Adrenal gland (tissue), 19 donors: ENCODE measurements at regions of chr1 and their contacts with region 1.

Region 1: DNA sequence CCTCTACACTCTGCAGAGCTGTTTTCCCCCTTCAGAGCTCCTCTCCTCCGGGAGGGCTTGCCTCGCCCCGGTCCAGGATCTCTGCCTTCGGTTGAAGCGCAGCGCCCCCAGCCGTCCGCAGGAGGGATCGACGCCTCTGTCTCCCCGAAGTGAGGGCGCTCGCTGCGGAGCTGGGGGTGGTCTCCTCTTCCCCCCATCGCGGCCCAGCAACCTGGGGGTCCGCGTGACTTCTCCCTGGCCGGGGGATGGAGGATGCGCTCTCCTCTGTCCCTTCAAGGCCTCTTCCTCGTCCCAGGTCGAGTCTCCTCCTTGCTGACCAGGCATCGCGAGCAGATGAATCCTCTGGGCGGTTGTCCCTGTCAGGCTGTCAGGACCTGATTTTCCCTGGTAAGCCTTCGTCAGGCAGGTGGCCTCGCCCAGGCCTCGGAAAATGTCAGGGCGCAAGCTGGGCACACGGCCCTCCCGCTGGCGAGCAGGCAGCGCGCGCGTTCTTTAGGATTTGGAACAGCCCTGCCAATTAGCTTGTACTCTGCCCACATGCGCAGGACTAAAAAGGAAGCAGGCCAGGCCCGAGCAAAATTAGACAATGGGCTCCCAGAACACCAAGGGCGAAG is 90.5 kb downstream of the EDEM3 start:
- DNase-seq: peak; percentile 68 to 89 (median 81)
- H3K4me3 ChIP-seq: peak overlapping the region in 2 of 4 donors; percentile 9 to 30
- H3K27ac ChIP-seq: peak overlapping the region in 2 of 5 donors; percentile 3 to 46
- H3K4me1 ChIP-seq: peaks cover 0 to 12% of the 10 kb centered on the region in 2 donors
- H3K27me3 ChIP-seq: no peaks in the 10 kb centered on the region
- CTCF ChIP-seq: peak; percentile 89 to 96 (median 94)
- POLR2A ChIP-seq: no peak

Region 2: DNA sequence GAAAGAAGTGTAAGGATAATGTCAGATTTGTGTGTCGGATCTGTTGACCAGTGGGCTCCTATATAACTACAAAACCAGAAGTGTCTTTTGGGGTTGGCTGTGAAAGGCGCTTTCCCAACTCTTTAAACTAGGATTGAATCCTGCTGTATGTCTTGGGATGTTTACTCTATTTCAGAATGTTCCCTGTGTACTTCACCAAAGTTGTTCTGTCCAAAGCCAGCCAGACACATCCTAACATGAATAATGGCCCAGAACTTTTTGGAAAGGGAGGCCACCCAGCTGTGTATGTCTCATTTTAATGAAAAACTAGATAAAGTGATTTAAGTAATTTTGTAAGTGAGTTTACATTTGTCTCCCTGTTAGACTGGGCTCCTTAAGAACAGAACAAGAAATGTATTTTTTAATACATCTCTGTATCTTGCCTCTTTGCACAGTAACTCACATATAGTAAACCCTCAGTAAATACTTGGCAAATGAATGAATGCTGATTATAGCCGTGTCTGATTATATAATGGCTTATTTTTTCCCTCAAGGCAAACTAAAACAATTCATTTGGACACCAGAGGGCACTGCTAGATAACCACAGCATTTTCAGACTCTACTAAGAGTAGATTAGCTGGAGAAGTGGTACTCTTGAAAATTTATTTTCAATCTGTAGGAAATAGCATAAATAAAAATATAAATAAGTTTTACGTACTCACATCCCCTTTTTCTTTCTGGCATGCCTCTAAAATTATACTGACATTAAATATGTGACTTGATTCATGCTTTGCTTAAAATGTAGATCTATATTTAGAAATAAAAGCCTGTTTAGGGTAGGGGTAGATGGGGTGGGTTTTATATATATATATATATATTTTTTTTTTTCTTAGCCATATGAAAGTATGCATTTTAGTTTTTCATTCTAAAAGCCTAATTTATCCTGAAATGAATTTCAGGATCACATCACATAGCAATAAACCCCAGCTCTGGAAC is 588.8 kb before region 1 on chr1:
- intact Hi-C with region 1: loop called in 1 of 2 experiments (anchors 10 kb)
- DNase-seq: peak in 6 of 7 donors; percentile 33 to 59 (median 54)
- H3K4me3 ChIP-seq: no peak overlapping the region
- H3K27ac ChIP-seq: peak overlapping the region in 2 of 5 donors; percentile 1 to 36
- H3K4me1 ChIP-seq: no peaks in the 10 kb centered on the region
- H3K27me3 ChIP-seq: no peaks in the 10 kb centered on the region
- CTCF ChIP-seq: peak; percentile 36 to 91 (median 86)
- POLR2A ChIP-seq: no peak

Region 3: GRCh38 chr1:184386312-184387068 is 277.7 kb before region 1 on chr1 and contains the start of gene C1orf21:
- intact Hi-C with region 1: loop called (anchors 10 kb)
- DNase-seq: peak; percentile 88 to 93 (median 91)
- H3K4me3 ChIP-seq: peak within 1 kb of the TSS; percentile 70 to 96 (median 76)
- H3K27ac ChIP-seq: peak within 1 kb of the TSS; percentile 50 to 90 (median 88)
- H3K4me1 ChIP-seq: peaks cover 27 to 28% of the 10 kb centered on the region in 2 donors
- H3K27me3 ChIP-seq: no peaks in the 10 kb centered on the region
- CTCF ChIP-seq: no peak
- POLR2A ChIP-seq: peak in 1 of 2 donors; percentile 48
- total RNA-seq, gene C1orf21: 23.2 to 177 (median 88.1) TPM

Region 4: DNA sequence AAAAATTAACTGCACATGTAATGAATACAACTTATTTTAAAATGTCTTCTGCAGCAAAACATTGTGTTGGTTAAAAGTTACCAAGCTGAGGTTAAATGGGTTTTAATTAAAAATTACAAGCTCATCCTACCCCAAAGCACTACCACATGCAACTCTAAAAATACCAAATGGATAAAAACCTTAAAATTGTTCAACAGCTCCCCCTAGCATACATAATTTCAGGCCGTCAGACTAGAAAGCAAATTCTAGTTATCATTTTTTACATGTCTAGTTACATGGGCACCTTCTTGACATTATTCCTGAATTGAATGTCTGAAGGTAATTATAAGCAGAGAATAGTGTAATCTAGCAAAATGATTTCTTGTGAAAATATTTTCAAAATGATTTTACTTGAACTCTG is 100.8 kb before region 1 on chr1:
- intact Hi-C with region 1: loop called in 1 of 2 experiments (anchors 10 kb)
- DNase-seq: no peak
- H3K4me3 ChIP-seq: no peak overlapping the region
- H3K27ac ChIP-seq: peak overlapping the region in 1 of 5 donors; percentile 46
- H3K4me1 ChIP-seq: peaks cover 12 to 31% of the 10 kb centered on the region in 2 donors
- H3K27me3 ChIP-seq: no peaks in the 10 kb centered on the region
- CTCF ChIP-seq: peak in 5 of 6 experiments; percentile 43 to 65 (median 55)
- POLR2A ChIP-seq: no peak

Region 5: GRCh38 chr1:184610876-184611595 is 53.1 kb before region 1 on chr1:
- intact Hi-C with region 1: no loop called
- DNase-seq: no peak
- H3K4me3 ChIP-seq: no peak overlapping the region
- H3K27ac ChIP-seq: no peak overlapping the region
- H3K4me1 ChIP-seq: peaks cover 0 to 15% of the 10 kb centered on the region in 2 donors
- H3K27me3 ChIP-seq: no peaks in the 10 kb centered on the region
- CTCF ChIP-seq: no peak
- POLR2A ChIP-seq: no peak